OCI-LY7 (cell line): ENCODE measurements at regions of chr12 and their contacts with region 1.

Region 1: GRCh38 chr12:52884526-52885293 is 20.2 kb downstream of the KRT8 start:
- DNase-seq: peak; percentile 66
- H3K4me3 ChIP-seq: no peak overlapping the region
- H3K27ac ChIP-seq: no peak overlapping the region
- H3K4me1 ChIP-seq: no peaks in the 10 kb centered on the region
- CTCF ChIP-seq: peak; percentile 97

Region 2: DNA sequence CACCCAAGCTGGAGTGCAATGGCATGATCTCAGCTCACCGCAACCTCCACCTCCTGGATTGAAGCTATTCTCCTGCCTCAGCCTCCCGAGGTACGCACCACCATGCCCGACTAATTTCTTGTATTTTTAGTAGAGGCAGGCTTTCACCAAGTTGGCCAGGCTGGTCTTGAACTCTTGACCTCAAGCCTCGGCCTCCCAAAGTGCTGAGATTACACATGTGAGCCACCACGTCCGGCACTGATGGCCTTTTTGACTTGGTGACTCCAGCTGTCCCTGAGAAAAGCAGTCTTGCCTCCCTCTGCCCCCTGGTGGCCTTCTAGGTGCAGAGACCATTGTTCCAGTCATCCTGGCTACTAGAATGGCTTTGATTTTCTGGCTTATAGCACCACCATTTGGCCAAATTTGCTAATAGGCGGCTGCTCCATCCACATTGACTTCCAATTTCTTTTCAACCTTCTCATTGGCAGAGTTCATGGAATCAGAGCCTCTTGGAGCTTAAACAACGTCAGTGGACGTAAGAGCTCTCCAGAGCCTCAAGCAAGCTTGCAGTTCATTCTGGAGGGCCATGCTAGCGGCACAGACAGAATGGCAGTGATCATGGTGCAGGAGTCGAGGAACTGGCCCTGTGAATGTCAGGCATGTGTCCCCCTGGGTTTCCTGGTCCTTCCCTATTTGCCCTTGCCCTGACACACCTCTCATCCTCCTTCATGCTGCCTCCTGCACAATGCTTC is 96.1 kb after region 1 on chr12:
- CTCF ChIA-PET with region 1: interaction called, 28 read pairs
- POLR2A ChIA-PET with region 1: interaction called, 5 read pairs
- intact Hi-C with region 1: loop called (anchors 1 kb)
- DNase-seq: peak; percentile 88
- H3K4me3 ChIP-seq: no peak overlapping the region
- H3K27ac ChIP-seq: no peak overlapping the region
- H3K4me1 ChIP-seq: no peaks in the 10 kb centered on the region
- CTCF ChIP-seq: peak; percentile 100